Activated CD4-positive, alpha-beta T cell treated with anti-CD3 and anti-CD28 coated beads, Interleukin-2, amount 10 ng/mL, durations not matched to agents 24 days and 14 days (primary cell): ENCODE measurements at regions of chr4 and their contacts with region 1.

Region 1: DNA sequence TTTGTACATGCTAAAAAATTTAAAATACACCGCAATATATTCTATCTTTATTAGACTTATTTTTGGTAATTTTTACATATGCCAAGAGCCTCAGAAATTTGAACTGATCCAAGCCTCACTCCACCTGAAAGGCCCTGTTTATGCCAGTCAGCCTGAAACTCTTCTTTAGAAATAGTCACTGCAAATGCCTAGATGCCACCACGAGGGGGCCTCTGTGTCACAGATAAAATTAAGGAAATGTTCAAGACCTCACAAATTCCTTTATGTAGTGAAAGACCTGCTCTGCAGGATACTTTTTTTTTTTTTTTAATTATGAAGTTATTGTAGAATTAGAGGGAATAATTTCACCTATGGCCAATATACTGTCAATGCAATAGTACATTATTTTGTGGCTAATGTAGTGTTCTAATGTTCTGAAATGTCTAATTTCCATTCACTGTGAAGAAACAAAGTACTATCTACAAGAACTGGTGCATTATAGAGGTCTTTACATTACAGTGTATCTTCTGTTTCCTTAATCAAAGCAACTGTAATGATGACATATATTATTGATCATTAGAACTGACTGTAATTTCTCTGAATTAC is 69.8 kb downstream of the DTHD1 start:
- DNase-seq: peak; percentile 92
- H3K4me3 Mint-ChIP-seq: no peak overlapping the region
- H3K27ac Mint-ChIP-seq: no peak overlapping the region
- H3K4me1 Mint-ChIP-seq: peaks cover 34% of the 10 kb centered on the region
- H3K27me3 Mint-ChIP-seq: peaks cover 6% of the 10 kb centered on the region

Region 2: GRCh38 chr4:36024901-36025660 is 326.1 kb before region 1 on chr4:
- intact Hi-C with region 1: no loop called
- DNase-seq: no peak
- H3K4me3 Mint-ChIP-seq: no peak overlapping the region
- H3K27ac Mint-ChIP-seq: no peak overlapping the region
- H3K4me1 Mint-ChIP-seq: no peaks in the 10 kb centered on the region
- H3K27me3 Mint-ChIP-seq: no peaks in the 10 kb centered on the region

Region 3: GRCh38 chr4:36255577-36255976 is 95.6 kb before region 1 on chr4:
- intact Hi-C with region 1: loop called (anchors 1 kb)
- DNase-seq: peak; percentile 91
- H3K4me3 Mint-ChIP-seq: peak overlapping the region; percentile 70
- H3K27ac Mint-ChIP-seq: peak overlapping the region; percentile 91
- H3K4me1 Mint-ChIP-seq: peaks cover 28% of the 10 kb centered on the region
- H3K27me3 Mint-ChIP-seq: no peaks in the 10 kb centered on the region

Region 4: DNA sequence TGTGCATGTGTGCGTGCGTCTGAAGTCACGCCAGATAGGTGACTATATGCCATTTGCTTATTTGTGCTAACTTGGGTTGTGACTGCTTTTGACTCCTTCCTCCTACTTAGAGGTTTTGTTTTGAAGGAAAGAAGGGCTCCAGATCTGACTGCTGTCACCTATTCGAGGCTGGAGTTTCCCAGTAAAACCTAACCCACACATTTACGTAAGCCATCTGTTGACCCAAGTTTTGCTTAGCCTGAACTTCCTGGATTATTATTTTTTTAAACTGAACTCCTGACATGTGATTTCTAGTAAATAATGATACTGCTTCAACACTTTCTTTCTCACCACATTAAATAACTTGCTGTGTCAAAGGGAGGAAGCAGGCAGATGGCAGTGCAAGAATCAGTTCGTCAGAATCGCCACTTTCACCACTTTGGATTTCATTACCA is 28.2 kb before region 1 on chr4:
- intact Hi-C with region 1: loop called (anchors 1 kb)
- DNase-seq: peak; percentile 90
- H3K4me3 Mint-ChIP-seq: peak overlapping the region; percentile 21
- H3K27ac Mint-ChIP-seq: peak overlapping the region; percentile 93
- H3K4me1 Mint-ChIP-seq: peaks cover 71% of the 10 kb centered on the region
- H3K27me3 Mint-ChIP-seq: no peaks in the 10 kb centered on the region

Region 5: GRCh38 chr4:36394352-36394903 is 43.3 kb after region 1 on chr4:
- intact Hi-C with region 1: loop called (anchors 1 kb)
- DNase-seq: peak; percentile 88
- H3K4me3 Mint-ChIP-seq: peak overlapping the region; percentile 70
- H3K27ac Mint-ChIP-seq: peak overlapping the region; percentile 97
- H3K4me1 Mint-ChIP-seq: peaks cover 23% of the 10 kb centered on the region
- H3K27me3 Mint-ChIP-seq: no peaks in the 10 kb centered on the region

Region 6: GRCh38 chr4:36549252-36549651 is 198.1 kb after region 1 on chr4:
- intact Hi-C with region 1: no loop called
- DNase-seq: no peak
- H3K4me3 Mint-ChIP-seq: no peak overlapping the region
- H3K27ac Mint-ChIP-seq: no peak overlapping the region
- H3K4me1 Mint-ChIP-seq: peaks cover 7% of the 10 kb centered on the region
- H3K27me3 Mint-ChIP-seq: no peaks in the 10 kb centered on the region

Region 7: GRCh38 chr4:37389967-37390580 is 1038.9 kb after region 1 on chr4:
- intact Hi-C with region 1: loop called (anchors 5 kb)
- DNase-seq: peak; percentile 83
- H3K4me3 Mint-ChIP-seq: no peak overlapping the region
- H3K27ac Mint-ChIP-seq: no peak overlapping the region
- H3K4me1 Mint-ChIP-seq: peaks cover 11% of the 10 kb centered on the region
- H3K27me3 Mint-ChIP-seq: peaks cover 2% of the 10 kb centered on the region